ENCODE measurements at regions of chr1 and their contacts with region 1.

Region 1: GRCh38 chr1:44714944-44715571 is 15.9 kb downstream of the RNU5D-1 start:
- DNase-seq: no peak
- ATAC-seq: peak; percentile 78
- H3K4me3 Mint-ChIP-seq: peak overlapping the region; percentile 58
- H3K27ac Mint-ChIP-seq: peak overlapping the region; percentile 89
- H3K4me1 Mint-ChIP-seq: peaks cover 75% of the 10 kb centered on the region
- H3K27me3 Mint-ChIP-seq: no peaks in the 10 kb centered on the region
- CTCF ChIP-seq: peak; percentile 72

Region 2: DNA sequence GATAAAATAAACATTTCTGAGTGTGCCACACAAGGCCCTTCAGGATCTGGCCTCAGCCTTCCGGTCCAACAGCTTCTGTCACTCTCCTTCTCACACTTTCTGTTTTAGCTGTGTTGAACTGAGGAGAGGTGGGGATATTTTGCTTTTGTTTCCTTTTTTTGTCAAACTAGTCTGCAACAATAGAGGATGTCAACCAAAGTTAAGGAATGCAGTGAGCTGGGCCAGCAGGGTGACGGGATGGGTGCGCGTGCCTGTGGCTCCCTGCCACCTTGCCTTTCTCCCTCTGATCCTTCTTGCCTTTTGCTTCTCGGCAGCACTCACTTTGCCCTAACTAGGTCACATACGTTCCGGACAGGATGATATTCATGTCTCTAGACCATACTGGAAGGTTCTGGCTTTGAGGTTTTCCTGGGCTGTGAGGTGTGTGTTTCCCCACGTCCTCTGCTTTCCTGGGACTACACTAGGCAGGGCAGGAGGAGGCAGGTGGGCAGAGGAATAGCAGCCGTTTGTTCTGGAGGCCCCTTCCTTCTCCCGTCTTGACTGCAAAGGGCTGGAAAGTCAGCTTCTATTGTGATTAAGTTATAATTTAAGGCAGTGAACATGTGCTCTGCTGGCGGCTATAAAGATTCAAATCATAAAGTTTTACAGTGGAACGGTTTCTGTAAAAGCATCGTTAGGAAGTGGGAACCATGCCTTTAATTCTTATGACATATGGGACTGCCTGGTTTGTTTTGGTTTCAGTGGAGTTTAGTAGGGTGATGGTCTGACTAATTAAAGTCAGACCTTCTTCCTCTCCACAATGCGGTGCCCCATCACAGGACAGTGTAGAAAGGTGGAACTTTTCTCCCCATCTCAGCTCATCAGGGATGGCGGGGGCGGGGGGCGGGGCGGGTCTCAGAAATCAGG is 242.2 kb before region 1 on chr1:
- CTCF ChIA-PET with region 1: no interaction called
- POLR2A ChIA-PET with region 1: no interaction called
- intact Hi-C with region 1: no loop called
- DNase-seq: no peak
- ATAC-seq: no peak
- H3K4me3 Mint-ChIP-seq: no peak overlapping the region
- H3K27ac Mint-ChIP-seq: no peak overlapping the region
- H3K4me1 Mint-ChIP-seq: peaks cover 5% of the 10 kb centered on the region
- H3K27me3 Mint-ChIP-seq: peaks cover 18% of the 10 kb centered on the region
- CTCF ChIP-seq: no peak

Region 3: DNA sequence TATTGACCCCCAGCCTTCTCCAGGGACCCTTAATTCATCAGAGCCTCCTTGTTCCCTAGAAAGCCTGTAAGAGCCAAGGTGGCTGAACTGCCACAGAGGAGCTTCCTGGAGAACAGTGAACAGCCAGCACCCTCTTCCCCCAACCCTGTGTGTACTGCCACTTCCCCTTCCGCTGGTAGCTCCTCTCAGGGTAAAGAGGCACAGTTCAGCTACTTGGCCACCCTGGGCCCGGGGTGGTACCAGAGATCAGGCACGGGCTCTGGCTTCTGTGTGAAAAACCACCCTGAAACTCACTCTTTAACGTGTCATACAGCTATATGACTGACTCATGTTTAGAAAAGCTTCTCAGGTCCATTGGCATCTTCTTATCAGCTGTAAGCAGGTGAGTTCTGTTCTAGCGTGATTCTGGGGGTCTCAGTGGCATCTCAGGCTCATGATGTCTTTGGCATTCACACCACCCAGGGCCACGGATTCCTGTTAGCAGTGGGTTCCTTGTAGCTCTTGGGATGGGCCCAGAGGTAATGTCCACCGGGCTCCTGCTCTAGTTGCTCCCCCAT is 18.2 kb before region 1 on chr1:
- CTCF ChIA-PET with region 1: interaction called, 6 read pairs
- POLR2A ChIA-PET with region 1: interaction called, 10 read pairs
- intact Hi-C with region 1: loop called (anchors 2 kb)
- DNase-seq: peak; percentile 30
- ATAC-seq: peak; percentile 70
- H3K4me3 Mint-ChIP-seq: peak overlapping the region; percentile 55
- H3K27ac Mint-ChIP-seq: peak overlapping the region; percentile 84
- H3K4me1 Mint-ChIP-seq: peaks cover 52% of the 10 kb centered on the region
- H3K27me3 Mint-ChIP-seq: no peaks in the 10 kb centered on the region
- CTCF ChIP-seq: no peak

Region 4: GRCh38 chr1:44747878-44748277 is 32.8 kb after region 1 on chr1:
- CTCF ChIA-PET with region 1: no interaction called
- POLR2A ChIA-PET with region 1: no interaction called
- intact Hi-C with region 1: no loop called
- DNase-seq: no peak
- ATAC-seq: no peak
- H3K4me3 Mint-ChIP-seq: no peak overlapping the region
- H3K27ac Mint-ChIP-seq: no peak overlapping the region
- H3K4me1 Mint-ChIP-seq: peaks cover 6% of the 10 kb centered on the region
- H3K27me3 Mint-ChIP-seq: no peaks in the 10 kb centered on the region
- CTCF ChIP-seq: no peak